ENCODE measurements at regions of chr3 and their contacts with region 1.

Region 1: GRCh38 chr3:128680602-128681368 is 30.2 kb upstream of the RPN1 start:
- DNase-seq: peak; percentile 95 to 98 (median 97)
- ATAC-seq: peak; percentile 89
- H3K4me3 ChIP-seq: peak overlapping the region; percentile 70 to 82
- H3K4me3 Mint-ChIP-seq: peak overlapping the region; percentile 90
- H3K27ac ChIP-seq: peak overlapping the region; percentile 93 to 98
- H3K27ac Mint-ChIP-seq: peak overlapping the region; percentile 99
- H3K4me1 ChIP-seq: peaks cover 14% of the 10 kb centered on the region
- H3K4me1 Mint-ChIP-seq: peaks cover 29% of the 10 kb centered on the region
- H3K27me3 ChIP-seq: no peaks in the 10 kb centered on the region
- H3K27me3 Mint-ChIP-seq: no peaks in the 10 kb centered on the region
- CTCF ChIP-seq: peak; percentile 86

Region 2: GRCh38 chr3:128404231-128404630 is 276.6 kb before region 1 on chr3:
- CTCF ChIA-PET with region 1: no interaction called
- POLR2A ChIA-PET with region 1: no interaction called
- intact Hi-C with region 1: no loop called
- DNase-seq: no peak
- ATAC-seq: no peak
- H3K4me3 ChIP-seq: no peak overlapping the region
- H3K4me3 Mint-ChIP-seq: no peak overlapping the region
- H3K27ac ChIP-seq: no peak overlapping the region
- H3K27ac Mint-ChIP-seq: no peak overlapping the region
- H3K4me1 ChIP-seq: no peaks in the 10 kb centered on the region
- H3K4me1 Mint-ChIP-seq: no peaks in the 10 kb centered on the region
- H3K27me3 ChIP-seq: no peaks in the 10 kb centered on the region
- H3K27me3 Mint-ChIP-seq: no peaks in the 10 kb centered on the region
- CTCF ChIP-seq: no peak

Region 3: GRCh38 chr3:128655531-128655930 is 25.3 kb before region 1 on chr3:
- CTCF ChIA-PET with region 1: interaction called, 10 read pairs
- POLR2A ChIA-PET with region 1: interaction called, 19 read pairs
- intact Hi-C with region 1: loop called (anchors 1 kb)
- DNase-seq: no peak
- ATAC-seq: no peak
- H3K4me3 ChIP-seq: no peak overlapping the region
- H3K4me3 Mint-ChIP-seq: peak overlapping the region; percentile 59
- H3K27ac ChIP-seq: no peak overlapping the region
- H3K27ac Mint-ChIP-seq: no peak overlapping the region
- H3K4me1 ChIP-seq: peaks cover 4% of the 10 kb centered on the region
- H3K4me1 Mint-ChIP-seq: peaks cover 14% of the 10 kb centered on the region
- H3K27me3 ChIP-seq: no peaks in the 10 kb centered on the region
- H3K27me3 Mint-ChIP-seq: no peaks in the 10 kb centered on the region
- CTCF ChIP-seq: no peak

Region 4: DNA sequence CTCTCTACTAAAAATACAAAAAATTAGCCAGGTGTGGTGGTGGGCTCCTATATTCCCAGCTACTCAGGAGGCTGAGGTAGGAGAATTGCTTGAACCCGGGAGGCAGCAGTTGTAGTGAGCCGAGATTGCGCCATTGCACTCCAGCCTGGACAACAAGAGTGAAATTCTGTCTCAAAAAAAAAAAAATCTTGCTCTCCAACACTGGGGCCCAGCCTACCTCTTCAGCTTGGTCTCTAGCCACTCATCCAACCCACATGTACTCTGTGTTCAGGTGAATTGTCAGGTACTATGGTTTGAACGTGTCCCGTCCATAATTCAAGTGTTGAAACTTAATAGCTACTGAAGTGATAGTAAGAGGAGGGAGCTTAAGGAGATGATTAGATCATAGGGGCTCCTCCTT is 22.8 kb after region 1 on chr3:
- CTCF ChIA-PET with region 1: interaction called, 16 read pairs
- POLR2A ChIA-PET with region 1: interaction called, 5 read pairs
- intact Hi-C with region 1: loop called in 1 of 2 experiments (anchors 2 kb)
- DNase-seq: no peak
- ATAC-seq: no peak
- H3K4me3 ChIP-seq: no peak overlapping the region
- H3K4me3 Mint-ChIP-seq: no peak overlapping the region
- H3K27ac ChIP-seq: no peak overlapping the region
- H3K27ac Mint-ChIP-seq: no peak overlapping the region
- H3K4me1 ChIP-seq: no peaks in the 10 kb centered on the region
- H3K4me1 Mint-ChIP-seq: peaks cover 1% of the 10 kb centered on the region
- H3K27me3 ChIP-seq: no peaks in the 10 kb centered on the region
- H3K27me3 Mint-ChIP-seq: peaks cover 2% of the 10 kb centered on the region
- CTCF ChIP-seq: no peak

Region 5: GRCh38 chr3:128760042-128760441 is 79.3 kb after region 1 on chr3:
- CTCF ChIA-PET with region 1: interaction called, 10 read pairs
- POLR2A ChIA-PET with region 1: interaction called, 7 read pairs
- intact Hi-C with region 1: no loop called
- DNase-seq: no peak
- ATAC-seq: no peak
- H3K4me3 ChIP-seq: no peak overlapping the region
- H3K4me3 Mint-ChIP-seq: no peak overlapping the region
- H3K27ac ChIP-seq: peak overlapping the region in 1 of 2 experiments; percentile 55
- H3K27ac Mint-ChIP-seq: peak overlapping the region; percentile 64
- H3K4me1 ChIP-seq: peaks cover 19% of the 10 kb centered on the region
- H3K4me1 Mint-ChIP-seq: peaks cover 69% of the 10 kb centered on the region
- H3K27me3 ChIP-seq: no peaks in the 10 kb centered on the region
- H3K27me3 Mint-ChIP-seq: no peaks in the 10 kb centered on the region
- CTCF ChIP-seq: no peak

Region 6: GRCh38 chr3:128794770-128795649 is 114.2 kb after region 1 on chr3:
- CTCF ChIA-PET with region 1: interaction called, 88 read pairs
- POLR2A ChIA-PET with region 1: interaction called, 31 read pairs
- intact Hi-C with region 1: loop called (anchors 1 to 2 kb)
- DNase-seq: peak; percentile 32 to 85 (median 64)
- ATAC-seq: peak; percentile 99
- H3K4me3 ChIP-seq: no peak overlapping the region
- H3K4me3 Mint-ChIP-seq: peak overlapping the region; percentile 9
- H3K27ac ChIP-seq: peak overlapping the region in 1 of 2 experiments; percentile 17
- H3K27ac Mint-ChIP-seq: peak overlapping the region; percentile 80
- H3K4me1 ChIP-seq: peaks cover 44% of the 10 kb centered on the region
- H3K4me1 Mint-ChIP-seq: peaks cover 55% of the 10 kb centered on the region
- H3K27me3 ChIP-seq: no peaks in the 10 kb centered on the region
- H3K27me3 Mint-ChIP-seq: no peaks in the 10 kb centered on the region
- CTCF ChIP-seq: peak; percentile 81

Region 7: GRCh38 chr3:128845778-128846485 is 165.1 kb after region 1 on chr3:
- CTCF ChIA-PET with region 1: interaction called, 42 read pairs
- POLR2A ChIA-PET with region 1: interaction called, 20 read pairs
- intact Hi-C with region 1: loop called (anchors 1 kb)
- DNase-seq: peak; percentile 58 to 85 (median 79)
- ATAC-seq: peak; percentile 82
- H3K4me3 ChIP-seq: peak overlapping the region; percentile 51 to 74
- H3K4me3 Mint-ChIP-seq: peak overlapping the region; percentile 80
- H3K27ac ChIP-seq: peak overlapping the region; percentile 17 to 45
- H3K27ac Mint-ChIP-seq: peak overlapping the region; percentile 78
- H3K4me1 ChIP-seq: peaks cover 19% of the 10 kb centered on the region
- H3K4me1 Mint-ChIP-seq: peaks cover 9% of the 10 kb centered on the region
- H3K27me3 ChIP-seq: no peaks in the 10 kb centered on the region
- H3K27me3 Mint-ChIP-seq: no peaks in the 10 kb centered on the region
- CTCF ChIP-seq: peak; percentile 75

Region 8: DNA sequence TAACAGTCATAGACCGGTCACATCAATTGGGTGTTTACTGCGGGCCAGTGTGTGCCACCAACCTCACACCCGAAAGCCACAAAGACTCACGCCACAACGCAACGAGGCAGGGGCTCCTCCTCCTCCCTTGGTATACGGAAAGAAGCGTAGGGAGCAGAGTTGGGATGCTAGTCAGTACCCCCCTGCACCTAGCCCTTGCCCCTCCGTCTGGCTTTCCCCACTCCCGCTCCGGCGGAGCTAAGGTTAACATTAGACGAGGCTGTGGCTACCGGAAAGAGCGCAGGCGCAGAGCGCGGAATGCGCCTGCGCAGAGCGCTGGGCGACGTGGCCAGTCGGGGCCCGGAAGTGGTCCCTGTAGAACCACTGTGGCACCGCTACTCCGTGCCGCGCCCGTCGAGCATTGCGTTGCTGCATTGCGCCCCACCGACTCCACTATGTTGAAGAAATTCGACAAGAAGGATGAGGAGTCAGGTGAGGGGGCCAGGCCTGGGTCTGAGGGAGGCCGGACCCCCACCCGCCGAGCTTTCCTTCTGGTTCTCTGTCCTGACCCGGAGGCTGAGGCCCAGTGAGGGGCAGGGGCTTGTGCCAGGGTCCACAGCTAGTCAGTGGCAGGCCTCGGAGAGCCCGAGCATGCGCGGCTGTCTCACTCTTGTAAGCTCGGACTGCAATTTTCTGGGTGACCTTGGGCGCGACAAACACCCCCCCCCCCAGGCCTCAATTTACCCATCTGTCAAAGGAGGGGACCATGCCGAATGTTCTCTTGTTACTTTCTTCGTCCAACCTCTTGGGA is 568.7 kb after region 1 on chr3 and contains the start of gene COPG1:
- CTCF ChIA-PET with region 1: no interaction called
- POLR2A ChIA-PET with region 1: no interaction called
- intact Hi-C with region 1: loop called in 1 of 2 experiments (anchors 5 kb)
- DNase-seq: peak; percentile 72 to 95 (median 85)
- ATAC-seq: peak; percentile 83
- H3K4me3 ChIP-seq: peak within 1 kb of the TSS; percentile 80 to 87
- H3K4me3 Mint-ChIP-seq: peak within 1 kb of the TSS; percentile 96
- H3K27ac ChIP-seq: peak within 1 kb of the TSS; percentile 83 to 89
- H3K27ac Mint-ChIP-seq: peak within 1 kb of the TSS; percentile 96
- H3K4me1 ChIP-seq: peaks cover 31% of the 10 kb centered on the region
- H3K4me1 Mint-ChIP-seq: peaks cover 49% of the 10 kb centered on the region
- H3K27me3 ChIP-seq: no peaks in the 10 kb centered on the region
- H3K27me3 Mint-ChIP-seq: no peaks in the 10 kb centered on the region
- CTCF ChIP-seq: no peak
- total RNA-seq, gene COPG1: 77.0 to 93.5 TPM